ENCODE measurements at regions of chr10 and their contacts with region 1.

Region 1: GRCh38 chr10:3248888-3249758 is 76.5 kb upstream of the PITRM1 start:
- DNase-seq: peak; percentile 68
- ATAC-seq: peak; percentile 95
- H3K4me3 ChIP-seq: peak overlapping the region; percentile 52; the same call in 1 of the 2 replicates
- H3K27ac ChIP-seq: peak overlapping the region; percentile 96
- H3K4me1 ChIP-seq: peaks cover 18% of the 10 kb centered on the region
- H3K27me3 ChIP-seq: no peaks in the 10 kb centered on the region
- CTCF ChIP-seq: no peak

Region 2: GRCh38 chr10:3265088-3265487 is 16.0 kb after region 1 on chr10:
- CTCF ChIA-PET with region 1: no interaction called
- POLR2A ChIA-PET with region 1: interaction called, 13 read pairs
- intact Hi-C with region 1: no loop called
- DNase-seq: no peak
- ATAC-seq: no peak
- H3K4me3 ChIP-seq: no peak overlapping the region
- H3K27ac ChIP-seq: no peak overlapping the region
- H3K4me1 ChIP-seq: no peaks in the 10 kb centered on the region
- H3K27me3 ChIP-seq: no peaks in the 10 kb centered on the region
- CTCF ChIP-seq: no peak

Region 3: GRCh38 chr10:3426190-3426701 is 177.1 kb after region 1 on chr10:
- CTCF ChIA-PET with region 1: no interaction called
- POLR2A ChIA-PET with region 1: no interaction called
- intact Hi-C with region 1: loop called (anchors 1 kb)
- DNase-seq: peak; percentile 75
- ATAC-seq: peak; percentile 62
- H3K4me3 ChIP-seq: no peak overlapping the region
- H3K27ac ChIP-seq: peak overlapping the region; percentile 83
- H3K4me1 ChIP-seq: peaks cover 40% of the 10 kb centered on the region
- H3K27me3 ChIP-seq: no peaks in the 10 kb centered on the region
- CTCF ChIP-seq: no peak

Region 4: DNA sequence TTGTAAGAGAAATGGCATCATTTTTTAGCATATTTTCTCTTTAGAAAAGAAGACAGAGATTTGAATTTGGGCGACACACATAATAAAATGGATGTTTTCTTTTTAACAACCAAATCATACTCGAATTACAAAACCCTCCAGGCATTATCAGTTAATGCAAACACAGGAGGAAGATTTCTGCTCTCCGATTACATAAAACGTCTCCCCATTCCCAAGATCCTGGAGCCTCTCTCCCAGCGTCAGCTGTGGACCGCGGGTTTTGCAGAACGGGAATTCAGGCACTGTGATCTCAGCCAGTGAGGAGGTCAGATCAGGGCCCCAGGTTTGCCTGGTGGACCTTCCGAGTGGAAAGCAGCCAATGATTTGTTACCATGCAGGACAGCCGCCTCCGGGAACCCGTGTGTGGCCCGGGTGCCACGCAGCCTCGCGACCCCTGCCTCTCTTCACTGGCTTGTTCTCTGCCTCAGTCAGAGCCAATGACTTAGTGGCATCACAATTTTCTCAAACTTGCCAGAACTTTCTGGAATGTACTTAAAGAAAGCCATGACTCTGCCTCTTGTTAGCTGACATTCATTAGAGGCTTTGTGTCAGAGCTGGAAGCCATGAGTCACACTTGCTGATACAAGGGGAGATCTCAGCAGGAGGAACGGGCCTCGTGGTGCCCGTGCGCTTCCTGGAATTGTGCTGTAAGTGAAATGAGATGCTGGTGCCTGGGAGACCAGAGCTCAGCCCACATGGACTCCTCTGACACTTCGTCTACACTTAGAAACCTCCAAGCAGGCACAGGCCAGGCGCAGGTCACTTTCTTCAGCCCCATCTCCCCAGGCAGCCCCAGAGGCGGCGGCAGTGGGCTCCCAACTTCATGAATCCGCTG is 289.8 kb after region 1 on chr10:
- CTCF ChIA-PET with region 1: no interaction called
- POLR2A ChIA-PET with region 1: no interaction called
- intact Hi-C with region 1: loop called (anchors 5 kb)
- DNase-seq: peak; percentile 64
- ATAC-seq: peak; percentile 68
- H3K4me3 ChIP-seq: peak overlapping the region; percentile 39; the same call in 1 of the 2 replicates
- H3K27ac ChIP-seq: peak overlapping the region; percentile 89
- H3K4me1 ChIP-seq: peaks cover 45% of the 10 kb centered on the region
- H3K27me3 ChIP-seq: no peaks in the 10 kb centered on the region
- CTCF ChIP-seq: no peak

Region 5: GRCh38 chr10:3776796-3777571 is 527.9 kb after region 1 on chr10:
- CTCF ChIA-PET with region 1: no interaction called
- POLR2A ChIA-PET with region 1: no interaction called
- intact Hi-C with region 1: loop called (anchors 5 kb)
- DNase-seq: peak; percentile 83
- ATAC-seq: peak; percentile 18
- H3K4me3 ChIP-seq: no peak overlapping the region
- H3K27ac ChIP-seq: peak overlapping the region; percentile 86
- H3K4me1 ChIP-seq: peaks cover 65% of the 10 kb centered on the region
- H3K27me3 ChIP-seq: no peaks in the 10 kb centered on the region
- CTCF ChIP-seq: no peak